ENCODE measurements at regions of chr17 and their contacts with region 1.

Region 1: DNA sequence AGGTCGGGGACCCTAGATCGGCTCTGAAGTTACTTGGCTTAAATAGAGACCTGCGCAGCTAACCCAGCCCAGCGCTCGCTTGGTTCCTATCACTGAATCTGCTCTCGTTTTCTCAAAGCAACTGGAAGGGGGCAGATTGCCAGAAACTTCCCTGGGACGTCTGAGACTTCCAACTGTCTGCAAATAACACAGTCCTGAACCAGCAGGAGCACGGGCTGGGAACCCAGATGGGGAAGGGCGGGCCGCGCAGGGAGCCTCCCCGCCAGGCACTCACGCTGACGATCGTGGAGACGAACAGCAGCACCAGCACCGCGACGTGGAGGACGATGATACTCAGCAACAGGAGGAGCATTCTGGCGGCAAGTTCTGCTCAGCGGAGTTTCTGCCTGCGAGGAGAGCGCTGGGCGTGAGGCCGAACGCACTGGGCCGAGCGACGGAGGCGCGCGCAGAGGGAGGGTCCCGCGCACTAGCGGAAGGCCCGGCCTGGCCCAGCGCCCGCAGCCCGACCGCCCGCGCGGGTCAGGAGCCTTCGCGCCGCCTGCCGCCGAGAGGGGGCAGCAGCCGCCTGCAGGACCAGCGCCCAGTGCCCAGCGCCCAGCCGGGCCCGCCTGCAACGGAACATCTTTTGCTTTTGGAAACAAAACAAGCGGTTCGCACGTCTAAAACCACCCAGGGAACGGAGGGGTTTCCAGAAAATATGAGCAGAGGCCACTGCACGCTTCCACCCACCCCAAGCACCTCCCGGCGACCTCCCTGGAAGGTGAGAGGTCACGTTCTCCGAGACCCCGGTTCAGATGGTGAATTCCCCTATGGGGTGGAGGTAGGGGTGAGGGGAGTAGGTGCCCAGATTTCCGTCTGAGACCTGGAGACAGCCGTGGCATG is 4.5 kb downstream of the PMP22 start:
- DNase-seq: peak; percentile 93 to 96
- ATAC-seq: peak; percentile 86
- H3K4me3 ChIP-seq: peak overlapping the region; percentile 70 to 86
- H3K27ac ChIP-seq: peak overlapping the region; percentile 78 to 98
- H3K4me1 ChIP-seq: no peaks in the 10 kb centered on the region
- H3K27me3 ChIP-seq: no peaks in the 10 kb centered on the region

Region 2: DNA sequence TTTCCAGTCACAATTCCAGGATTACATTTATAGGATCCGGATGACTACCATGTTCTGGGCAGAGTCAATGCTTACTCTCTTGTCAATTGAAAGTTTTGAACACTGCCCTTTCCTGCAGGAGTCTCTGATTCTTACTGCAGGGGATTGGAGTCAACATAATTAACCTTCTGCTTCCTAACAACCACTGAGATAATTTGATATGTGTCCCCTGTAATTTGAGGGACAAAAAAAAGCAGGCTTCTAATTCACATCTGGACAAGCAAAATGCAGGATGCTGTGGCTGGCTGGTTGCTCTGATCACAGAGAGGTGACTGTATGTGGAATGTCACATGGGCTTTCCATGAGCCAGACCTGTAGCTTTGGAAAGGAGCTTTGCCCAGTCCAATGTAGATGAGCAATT is 50.4 kb before region 1 on chr17:
- intact Hi-C with region 1: no loop called
- DNase-seq: no peak
- ATAC-seq: no peak
- H3K4me3 ChIP-seq: no peak overlapping the region
- H3K27ac ChIP-seq: no peak overlapping the region
- H3K4me1 ChIP-seq: no peaks in the 10 kb centered on the region
- H3K27me3 ChIP-seq: no peaks in the 10 kb centered on the region

Region 3: GRCh38 chr17:15332338-15332737 is 71.7 kb after region 1 on chr17:
- intact Hi-C with region 1: loop called in 1 of 2 experiments (anchors 5 kb)
- DNase-seq: no peak
- ATAC-seq: no peak
- H3K4me3 ChIP-seq: no peak overlapping the region
- H3K27ac ChIP-seq: no peak overlapping the region
- H3K4me1 ChIP-seq: no peaks in the 10 kb centered on the region
- H3K27me3 ChIP-seq: no peaks in the 10 kb centered on the region

Region 4: DNA sequence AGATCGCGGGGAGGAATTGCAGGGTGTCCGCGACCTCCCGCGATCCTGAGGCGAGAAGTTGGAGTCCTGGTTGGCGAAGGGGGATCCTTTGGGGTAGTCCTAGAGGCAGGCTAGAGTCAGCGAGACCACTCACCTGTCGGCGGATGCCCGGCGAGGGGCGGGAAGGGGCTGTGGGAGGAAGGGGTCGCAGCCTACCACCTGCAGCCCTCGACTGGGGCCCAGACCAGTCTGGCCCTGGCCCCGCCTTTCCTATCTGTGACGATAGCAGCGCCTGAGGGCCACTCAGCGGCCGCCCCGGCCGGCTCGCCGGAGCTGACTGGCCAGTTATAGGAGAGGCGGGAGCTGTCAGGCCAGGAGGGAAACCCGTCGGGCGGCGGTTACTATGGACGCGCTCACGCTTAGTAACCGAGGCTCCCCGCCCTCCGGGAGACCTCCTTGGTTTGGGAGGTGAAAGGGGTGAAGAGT is 80.8 kb after region 1 on chr17 and contains the start of gene TEKT3:
- intact Hi-C with region 1: loop called in 1 of 2 experiments (anchors 5 kb)
- DNase-seq: peak; percentile 93 to 94
- ATAC-seq: peak; percentile 95
- H3K4me3 ChIP-seq: peak within 1 kb of the TSS; percentile 16 to 19
- H3K27ac ChIP-seq: no peak within 1 kb of the TSS
- H3K4me1 ChIP-seq: peaks cover 0 to 3% of the 10 kb centered on the region in 2 donors
- H3K27me3 ChIP-seq: no peaks in the 10 kb centered on the region
- total RNA-seq, gene TEKT3: 1.9 to 2.5 TPM

Region 5: DNA sequence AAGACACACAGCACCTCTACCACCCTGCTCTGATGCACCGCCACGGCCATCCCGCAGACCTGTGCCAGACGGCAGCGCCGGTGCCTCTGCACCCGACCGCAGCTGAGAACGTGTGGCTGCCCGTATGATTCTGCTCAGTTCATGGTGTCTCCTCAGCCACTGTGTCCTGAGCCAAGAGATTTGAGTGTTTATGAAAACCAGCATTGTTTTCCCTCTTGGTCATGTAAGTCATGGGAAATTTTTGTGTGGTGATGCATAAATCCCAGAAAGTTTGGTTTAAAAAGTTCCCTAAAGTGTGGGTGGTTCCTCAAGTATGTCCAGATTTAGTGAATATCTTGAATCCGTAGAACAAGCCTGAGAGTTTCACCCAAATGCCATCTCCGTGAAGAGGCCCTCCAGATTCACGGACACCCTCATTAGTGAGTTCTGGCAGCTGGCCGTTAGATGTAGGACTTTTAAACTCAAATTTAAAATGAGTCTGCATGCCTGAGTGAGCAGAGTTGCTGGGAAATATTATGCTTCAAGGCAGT is 149.2 kb after region 1 on chr17:
- intact Hi-C with region 1: loop called in 1 of 2 experiments (anchors 5 kb)
- DNase-seq: peak in 1 of 2 donors; percentile 72
- ATAC-seq: peak; percentile 82
- H3K4me3 ChIP-seq: peak overlapping the region in 1 of 2 donors; percentile 12
- H3K27ac ChIP-seq: peak overlapping the region; percentile 16 to 71
- H3K4me1 ChIP-seq: peaks cover 0 to 3% of the 10 kb centered on the region in 2 donors
- H3K27me3 ChIP-seq: no peaks in the 10 kb centered on the region

Region 6: GRCh38 chr17:15462976-15463772 is 202.6 kb after region 1 on chr17:
- intact Hi-C with region 1: loop called in 1 of 2 experiments (anchors 2 kb)
- DNase-seq: peak; percentile 73 to 78
- ATAC-seq: peak; percentile 72
- H3K4me3 ChIP-seq: no peak overlapping the region
- H3K27ac ChIP-seq: peak overlapping the region in 1 of 2 donors; percentile 92
- H3K4me1 ChIP-seq: peaks cover 0 to 1% of the 10 kb centered on the region in 2 donors
- H3K27me3 ChIP-seq: no peaks in the 10 kb centered on the region

Region 7: DNA sequence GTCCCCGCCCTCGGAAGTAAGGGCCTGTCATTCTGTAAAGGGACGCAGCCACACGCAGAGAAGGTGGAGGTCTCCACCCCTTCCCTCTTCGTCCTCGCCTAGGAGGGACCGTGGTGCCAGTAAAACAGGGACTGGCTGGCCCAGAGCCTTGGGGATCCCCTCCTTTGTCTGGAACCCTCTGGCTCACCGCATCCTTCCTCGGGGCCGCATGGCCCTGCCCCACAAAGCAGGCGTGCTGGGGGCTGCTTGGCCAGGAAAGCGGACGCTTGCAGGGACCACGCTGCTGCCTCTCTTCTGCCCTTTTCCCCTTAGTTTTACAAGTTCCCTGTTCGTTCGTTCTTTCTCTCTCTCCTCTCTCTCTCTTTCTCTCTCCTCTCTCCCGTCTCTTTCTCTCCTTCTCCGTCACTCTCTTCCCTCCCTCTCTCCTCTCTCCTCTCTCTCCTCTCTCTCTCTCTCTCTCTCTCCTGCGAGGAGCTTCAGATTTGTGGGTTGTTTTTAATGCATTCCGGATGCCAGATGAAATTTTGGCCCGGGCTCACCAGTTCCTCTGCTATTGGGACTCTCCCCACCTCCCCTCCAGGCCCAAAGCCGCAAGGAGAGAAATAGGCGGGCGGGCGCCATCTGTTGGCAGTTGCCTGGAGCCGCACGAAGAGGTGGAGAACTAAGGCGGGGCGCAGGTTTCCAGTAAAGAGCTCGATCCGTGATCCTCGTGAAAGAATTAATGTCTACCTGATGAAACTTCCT is 241.9 kb after region 1 on chr17:
- intact Hi-C with region 1: loop called (anchors 1 to 2 kb)
- DNase-seq: peak; percentile 95 to 97
- ATAC-seq: peak; percentile 96
- H3K4me3 ChIP-seq: peak overlapping the region; percentile 8 to 13
- H3K27ac ChIP-seq: peak overlapping the region; percentile 15 to 17
- H3K4me1 ChIP-seq: no peaks in the 10 kb centered on the region
- H3K27me3 ChIP-seq: no peaks in the 10 kb centered on the region

Region 8: GRCh38 chr17:15900871-15901270 is 640.3 kb after region 1 on chr17:
- intact Hi-C with region 1: no loop called
- DNase-seq: no peak
- ATAC-seq: no peak
- H3K4me3 ChIP-seq: no peak overlapping the region
- H3K27ac ChIP-seq: no peak overlapping the region
- H3K4me1 ChIP-seq: no peaks in the 10 kb centered on the region
- H3K27me3 ChIP-seq: peaks cover 0 to 1% of the 10 kb centered on the region in 2 donors

Region 9: GRCh38 chr17:15999439-16000350 is 739.1 kb after region 1 on chr17 and contains the starts of genes TTC19 and ZSWIM7:
- intact Hi-C with region 1: loop called in 1 of 2 experiments (anchors 2 kb)
- DNase-seq: peak; percentile 98 to 99
- ATAC-seq: peak; percentile 99
- H3K4me3 ChIP-seq: peak within 1 kb of the TSS; percentile 59 to 74
- H3K27ac ChIP-seq: peak within 1 kb of the TSS; percentile 34 to 97
- H3K4me1 ChIP-seq: no peaks in the 10 kb centered on the region
- H3K27me3 ChIP-seq: no peaks in the 10 kb centered on the region
- total RNA-seq, gene TTC19: 25.9 to 32.4 TPM
- total RNA-seq, gene ZSWIM7: 14.6 to 15.3 TPM

Region 10: GRCh38 chr17:16122697-16123434 is 862.2 kb after region 1 on chr17:
- intact Hi-C with region 1: no loop called
- DNase-seq: no peak
- ATAC-seq: no peak
- H3K4me3 ChIP-seq: no peak overlapping the region
- H3K27ac ChIP-seq: no peak overlapping the region
- H3K4me1 ChIP-seq: no peaks in the 10 kb centered on the region
- H3K27me3 ChIP-seq: no peaks in the 10 kb centered on the region